A549 (cell line): ENCODE measurements at regions of chr6 and their contacts with region 1.

Region 1: GRCh38 chr6:36874443-36875249 is at the start of gene PPIL1:
- DNase-seq: peak; percentile 88 to 91
- ATAC-seq: peak; percentile 97
- H3K4me3 ChIP-seq: peak within 1 kb of the TSS; percentile 65
- H3K27ac ChIP-seq: peak within 1 kb of the TSS; percentile 88 to 98
- H3K4me1 ChIP-seq: peaks cover 9% of the 10 kb centered on the region; the same call in 2 of the 3 replicates
- CTCF ChIP-seq: no peak
- EP300 ChIP-seq: no peak
- POLR2A ChIP-seq: peak; percentile 4; the same call in 1 of the 2 replicates
- RAD21 ChIP-seq: no peak
- polyA plus RNA-seq, gene PPIL1: 58.7 and 60.0 TPM in 2 replicates

Region 2: GRCh38 chr6:36809941-36810803 is 64.5 kb before region 1 on chr6:
- CTCF ChIA-PET with region 1: no interaction called
- POLR2A ChIA-PET with region 1: no interaction called
- DNase-seq: no peak
- ATAC-seq: peak in 1 of 2 experiments; percentile 43; a peak in 1 of 6 replicates
- H3K4me3 ChIP-seq: no peak overlapping the region
- H3K27ac ChIP-seq: no peak overlapping the region
- H3K4me1 ChIP-seq: no peaks in the 10 kb centered on the region
- CTCF ChIP-seq: no peak
- EP300 ChIP-seq: no peak
- POLR2A ChIP-seq: no peak
- RAD21 ChIP-seq: 0 out of 5 replicates have a peak, but pooled peaks of 1 of the 2 experiments have one; percentile 8

Region 3: DNA sequence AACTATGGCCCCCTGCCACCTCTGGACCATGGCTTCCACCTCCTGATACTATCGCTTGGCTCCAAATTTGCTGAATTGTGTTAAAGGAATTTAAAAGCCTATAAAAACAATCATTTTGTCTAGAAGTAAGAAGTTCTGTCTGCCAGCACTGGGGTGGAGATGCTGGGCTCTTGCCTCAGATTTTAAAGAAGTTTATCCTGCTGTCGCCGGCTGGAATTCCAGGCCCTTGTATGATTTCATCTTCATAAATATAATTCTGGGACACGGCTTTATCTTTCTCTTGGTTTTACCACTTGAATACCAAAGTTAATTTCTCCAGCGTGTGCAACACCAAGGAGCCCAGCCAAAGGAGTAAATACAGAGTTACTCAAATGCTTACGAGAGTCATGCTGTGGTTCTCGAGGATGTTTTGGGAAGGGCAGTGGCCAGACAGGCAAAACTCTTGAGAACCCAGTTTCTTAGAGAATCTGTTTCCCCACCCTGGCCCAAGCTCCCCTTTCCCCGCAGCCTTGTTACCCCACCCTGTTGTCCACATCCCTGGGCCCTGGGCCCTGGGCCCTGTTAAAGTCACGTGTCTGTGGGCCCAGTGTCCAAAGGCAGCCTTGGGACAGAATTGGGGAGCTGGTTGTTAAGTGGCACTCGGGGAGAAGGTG is 43.0 kb after region 1 on chr6:
- CTCF ChIA-PET with region 1: no interaction called
- POLR2A ChIA-PET with region 1: no interaction called
- DNase-seq: no peak
- ATAC-seq: no peak
- H3K4me3 ChIP-seq: no peak overlapping the region
- H3K27ac ChIP-seq: no peak overlapping the region
- H3K4me1 ChIP-seq: peaks cover 25% of the 10 kb centered on the region
- CTCF ChIP-seq: no peak
- EP300 ChIP-seq: no peak
- POLR2A ChIP-seq: no peak
- RAD21 ChIP-seq: no peak

Region 4: GRCh38 chr6:36985808-36986703 is 111.4 kb after region 1 on chr6 and contains the start of gene MTCH1:
- CTCF ChIA-PET with region 1: no interaction called
- POLR2A ChIA-PET with region 1: interaction called, 11 read pairs
- DNase-seq: peak; percentile 76 to 81
- ATAC-seq: peak; percentile 92 to 93
- H3K4me3 ChIP-seq: peak within 1 kb of the TSS; percentile 100
- H3K27ac ChIP-seq: peak within 1 kb of the TSS; percentile 98 to 100
- H3K4me1 ChIP-seq: peaks cover 25% of the 10 kb centered on the region
- CTCF ChIP-seq: no peak
- EP300 ChIP-seq: no peak
- POLR2A ChIP-seq: peak; percentile 92
- RAD21 ChIP-seq: no peak
- polyA plus RNA-seq, gene MTCH1: 65.4 and 69.4 TPM in 2 replicates

Region 5: DNA sequence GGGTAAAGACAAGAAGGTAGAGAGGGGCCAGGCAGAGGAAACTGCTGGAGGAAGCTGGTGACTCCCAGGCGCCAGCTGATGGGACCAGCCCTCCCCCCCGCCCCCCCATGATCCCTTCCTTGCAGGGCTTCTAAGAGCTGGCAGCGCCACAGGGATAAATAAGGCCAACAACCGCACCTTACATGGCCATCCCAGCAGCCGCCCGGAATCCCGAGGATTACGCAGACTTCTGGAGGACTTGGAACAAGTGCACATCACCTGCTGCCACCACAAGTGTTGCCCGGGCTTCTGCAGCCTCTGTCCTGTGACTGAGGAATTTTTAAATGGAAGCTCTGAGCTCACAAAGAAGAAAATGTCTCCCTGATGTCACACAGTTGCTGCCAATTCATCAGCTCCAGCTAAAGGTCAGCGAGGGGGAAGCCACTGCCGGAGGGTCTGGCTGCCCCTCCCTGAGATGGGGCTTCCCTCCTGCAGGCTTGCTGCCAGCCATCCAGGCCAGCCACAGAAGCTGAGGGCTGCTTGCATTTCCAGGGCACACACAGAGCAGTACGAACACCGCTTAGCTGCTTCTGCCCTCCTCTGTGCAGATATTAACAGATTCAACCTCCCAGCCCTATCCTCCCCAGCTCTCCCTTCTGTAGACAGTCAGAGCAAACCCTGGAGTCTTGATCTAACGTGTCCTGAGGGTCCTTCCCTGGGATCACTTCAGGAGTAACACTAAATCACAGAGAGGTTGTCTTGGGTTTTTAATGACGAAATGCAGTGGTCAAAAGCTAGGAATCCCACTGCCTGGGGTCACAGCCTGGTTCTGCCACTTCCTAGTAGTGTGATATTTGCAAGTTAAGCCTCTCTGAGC is 256.7 kb after region 1 on chr6:
- CTCF ChIA-PET with region 1: no interaction called
- POLR2A ChIA-PET with region 1: no interaction called
- DNase-seq: peak; percentile 37 to 88
- ATAC-seq: peak; percentile 41 to 57
- H3K4me3 ChIP-seq: peak overlapping the region; percentile 23; the same call in 1 of the 3 replicates
- H3K27ac ChIP-seq: peak overlapping the region; percentile 83 to 93
- H3K4me1 ChIP-seq: peaks cover 87% of the 10 kb centered on the region
- CTCF ChIP-seq: no peak
- EP300 ChIP-seq: no peak
- POLR2A ChIP-seq: no peak
- RAD21 ChIP-seq: peak in 1 of 2 experiments; percentile 7; a peak in 1 of 5 replicates